ENCODE measurements at regions of chr1 and their contacts with region 1.

Region 1: GRCh38 chr1:204128964-204129896 is 22.6 kb downstream of the ETNK2 start:
- DNase-seq: peak; percentile 66
- H3K4me3 ChIP-seq: no peak overlapping the region
- H3K27ac ChIP-seq: no peak overlapping the region
- H3K4me1 ChIP-seq: peaks cover 26% of the 10 kb centered on the region
- H3K27me3 ChIP-seq: no peaks in the 10 kb centered on the region
- CTCF ChIP-seq: peak; percentile 81 to 93
- POLR2A ChIP-seq: no peak

Region 2: DNA sequence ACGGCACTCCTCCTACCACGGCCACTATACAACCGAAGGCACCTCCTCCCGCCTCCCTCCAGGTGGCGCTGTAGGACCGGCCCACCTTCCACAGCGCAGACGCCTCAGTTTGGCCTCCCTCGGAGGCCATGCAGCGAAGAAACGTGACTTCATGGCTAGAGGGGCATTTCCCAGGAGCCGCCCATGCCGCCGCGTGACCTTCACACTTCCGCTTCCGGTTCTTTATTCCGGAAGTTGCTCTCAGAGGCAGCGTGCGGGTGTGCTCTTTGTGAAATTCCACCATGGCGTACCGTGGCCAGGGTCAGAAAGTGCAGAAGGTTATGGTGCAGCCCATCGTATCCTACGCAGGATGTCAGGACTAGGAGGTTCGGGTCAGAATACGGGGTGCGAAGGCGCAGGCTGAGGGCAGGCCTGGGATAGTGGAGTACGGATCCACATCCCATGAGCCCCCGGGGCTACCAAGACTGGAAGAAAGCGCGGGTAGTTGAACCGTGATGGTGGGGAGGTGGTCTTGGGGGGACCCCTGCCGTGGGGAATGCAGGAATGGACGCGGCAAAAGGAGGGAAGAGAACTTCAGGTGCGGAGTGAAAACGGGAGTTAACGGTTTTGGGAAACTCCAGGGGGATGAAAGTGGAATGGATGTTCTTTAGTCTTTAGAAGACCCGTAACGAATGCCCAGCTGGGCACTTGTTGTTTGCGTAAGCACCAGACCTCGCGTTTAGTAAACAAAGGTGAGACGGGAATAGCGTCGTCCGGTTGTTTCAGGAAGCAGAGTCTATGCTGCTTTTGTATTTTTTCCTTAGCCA is 267.6 kb before region 1 on chr1 and contains the start of gene SNRPE:
- CTCF ChIA-PET with region 1: interaction called, 903 read pairs
- POLR2A ChIA-PET with region 1: interaction called, 11 read pairs
- dilution Hi-C with region 1: loop called (anchors 25 kb)
- intact Hi-C with region 1: loop called (anchors 1 kb)
- DNase-seq: peak; percentile 99
- H3K4me3 ChIP-seq: peak within 1 kb of the TSS; percentile 67 to 99 (median 94)
- H3K27ac ChIP-seq: peak within 1 kb of the TSS; percentile 71
- H3K4me1 ChIP-seq: peaks cover 23% of the 10 kb centered on the region
- H3K27me3 ChIP-seq: no peaks in the 10 kb centered on the region
- CTCF ChIP-seq: peak; percentile 92 to 95
- POLR2A ChIP-seq: peak; percentile 84
- total RNA-seq, gene SNRPE: 199 and 219 TPM in 2 replicates

Region 3: DNA sequence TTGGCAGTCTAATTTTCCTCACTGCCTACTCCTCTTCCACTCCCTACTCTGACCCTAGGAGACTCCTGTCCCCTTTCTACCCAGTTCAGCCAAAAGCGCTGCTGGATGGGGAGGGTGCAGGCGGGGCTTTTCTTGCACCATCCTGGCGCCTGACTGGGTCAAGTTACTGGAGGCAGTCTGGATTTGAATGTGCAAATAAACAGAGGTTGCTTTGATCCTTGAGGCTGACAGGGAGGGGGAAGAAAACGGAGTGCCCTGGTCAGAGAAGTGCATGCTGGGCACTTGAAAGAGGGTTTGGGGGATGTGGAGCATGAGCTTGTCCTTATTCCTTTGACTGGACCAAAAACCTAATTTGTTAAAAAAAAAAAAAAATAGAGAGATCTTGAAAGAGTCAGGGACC is 133.1 kb before region 1 on chr1:
- CTCF ChIA-PET with region 1: interaction called, 10 read pairs
- POLR2A ChIA-PET with region 1: no interaction called
- dilution Hi-C with region 1: no loop called
- intact Hi-C with region 1: loop called (anchors 10 kb)
- DNase-seq: no peak
- H3K4me3 ChIP-seq: no peak overlapping the region
- H3K27ac ChIP-seq: no peak overlapping the region
- H3K4me1 ChIP-seq: no peaks in the 10 kb centered on the region
- H3K27me3 ChIP-seq: peaks cover 1 to 6% of the 10 kb centered on the region in 2 experiments
- CTCF ChIP-seq: no peak
- POLR2A ChIP-seq: no peak

Region 4: DNA sequence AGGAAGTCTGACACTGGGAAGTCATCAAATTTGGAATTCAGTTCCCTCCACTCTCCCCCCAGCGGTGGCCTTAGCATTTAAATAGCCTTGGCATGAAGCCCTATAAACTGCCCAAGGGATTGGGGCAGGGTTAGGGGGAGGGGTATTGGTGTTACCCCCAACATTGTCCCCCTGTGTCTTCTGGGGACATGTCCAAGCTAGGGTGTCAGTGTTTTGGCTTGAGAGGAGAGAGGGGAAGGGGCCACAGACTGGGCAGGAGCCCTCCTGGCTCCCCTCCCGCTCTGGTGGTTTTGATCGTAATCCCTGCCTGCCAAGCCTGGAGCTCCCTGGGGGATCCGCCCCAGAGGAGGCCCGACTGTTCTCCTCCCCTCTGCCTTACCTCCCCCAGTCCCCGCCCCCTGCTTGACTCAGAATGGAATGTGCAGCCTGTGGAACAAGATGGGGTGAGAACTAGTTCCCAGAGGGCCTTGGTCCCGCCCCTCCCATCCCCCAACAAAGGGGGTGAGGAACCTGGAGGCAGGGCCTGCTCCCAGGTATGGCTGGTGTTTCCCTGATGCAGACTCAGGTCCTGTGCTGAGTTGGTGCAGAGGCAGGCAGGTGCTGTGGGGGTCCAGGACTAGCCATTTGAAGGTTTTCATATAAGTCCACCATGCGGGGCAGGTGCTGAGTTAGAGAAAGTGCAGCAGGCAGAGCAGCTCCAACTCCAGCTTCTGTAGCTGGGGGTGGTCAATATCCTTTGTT is 48.9 kb before region 1 on chr1:
- CTCF ChIA-PET with region 1: interaction called, 68 read pairs
- POLR2A ChIA-PET with region 1: no interaction called
- dilution Hi-C with region 1: no loop called
- intact Hi-C with region 1: loop called (anchors 1 kb)
- DNase-seq: no peak
- H3K4me3 ChIP-seq: no peak overlapping the region
- H3K27ac ChIP-seq: no peak overlapping the region
- H3K4me1 ChIP-seq: peaks cover 31% of the 10 kb centered on the region
- H3K27me3 ChIP-seq: no peaks in the 10 kb centered on the region
- CTCF ChIP-seq: no peak
- POLR2A ChIP-seq: no peak

Region 5: GRCh38 chr1:204114606-204115005 is 14.6 kb before region 1 on chr1:
- CTCF ChIA-PET with region 1: interaction called, 45 read pairs
- POLR2A ChIA-PET with region 1: no interaction called
- dilution Hi-C with region 1: no loop called
- intact Hi-C with region 1: no loop called
- DNase-seq: no peak
- H3K4me3 ChIP-seq: no peak overlapping the region
- H3K27ac ChIP-seq: no peak overlapping the region
- H3K4me1 ChIP-seq: peaks cover 9% of the 10 kb centered on the region
- H3K27me3 ChIP-seq: no peaks in the 10 kb centered on the region
- CTCF ChIP-seq: no peak
- POLR2A ChIP-seq: no peak

Region 6: GRCh38 chr1:204363335-204364124 is 234.3 kb after region 1 on chr1:
- CTCF ChIA-PET with region 1: interaction called, 9 read pairs
- POLR2A ChIA-PET with region 1: no interaction called
- dilution Hi-C with region 1: no loop called
- intact Hi-C with region 1: loop called (anchors 1 kb)
- DNase-seq: peak; percentile 83
- H3K4me3 ChIP-seq: peak overlapping the region in 2 of 3 experiments; percentile 30 to 35
- H3K27ac ChIP-seq: no peak overlapping the region
- H3K4me1 ChIP-seq: peaks cover 53% of the 10 kb centered on the region
- H3K27me3 ChIP-seq: no peaks in the 10 kb centered on the region
- CTCF ChIP-seq: peak; percentile 93 to 94
- POLR2A ChIP-seq: no peak